Gastrocnemius medialis (tissue), 4 donors: ENCODE measurements at regions of chr1 and their contacts with region 1.

Region 1: GRCh38 chr1:44730741-44731512 is at the start of gene RNU5D-1:
- DNase-seq: peak; percentile 80 to 94
- ATAC-seq: peak; percentile 81 to 87
- H3K4me3 ChIP-seq: peak within 1 kb of the TSS in 3 of 4 donors; percentile 3 to 34 (median 3)
- H3K27ac ChIP-seq: peak within 1 kb of the TSS; percentile 70 to 87 (median 79)
- H3K4me1 ChIP-seq: peaks cover 9 to 12% of the 10 kb centered on the region in 2 donors
- H3K27me3 ChIP-seq: no peaks in the 10 kb centered on the region
- CTCF ChIP-seq: peak; percentile 77 to 89 (median 81)
- POLR2A ChIP-seq: peak; percentile 79 to 97
- total RNA-seq, gene RNU5D-1: not detected

Region 2: DNA sequence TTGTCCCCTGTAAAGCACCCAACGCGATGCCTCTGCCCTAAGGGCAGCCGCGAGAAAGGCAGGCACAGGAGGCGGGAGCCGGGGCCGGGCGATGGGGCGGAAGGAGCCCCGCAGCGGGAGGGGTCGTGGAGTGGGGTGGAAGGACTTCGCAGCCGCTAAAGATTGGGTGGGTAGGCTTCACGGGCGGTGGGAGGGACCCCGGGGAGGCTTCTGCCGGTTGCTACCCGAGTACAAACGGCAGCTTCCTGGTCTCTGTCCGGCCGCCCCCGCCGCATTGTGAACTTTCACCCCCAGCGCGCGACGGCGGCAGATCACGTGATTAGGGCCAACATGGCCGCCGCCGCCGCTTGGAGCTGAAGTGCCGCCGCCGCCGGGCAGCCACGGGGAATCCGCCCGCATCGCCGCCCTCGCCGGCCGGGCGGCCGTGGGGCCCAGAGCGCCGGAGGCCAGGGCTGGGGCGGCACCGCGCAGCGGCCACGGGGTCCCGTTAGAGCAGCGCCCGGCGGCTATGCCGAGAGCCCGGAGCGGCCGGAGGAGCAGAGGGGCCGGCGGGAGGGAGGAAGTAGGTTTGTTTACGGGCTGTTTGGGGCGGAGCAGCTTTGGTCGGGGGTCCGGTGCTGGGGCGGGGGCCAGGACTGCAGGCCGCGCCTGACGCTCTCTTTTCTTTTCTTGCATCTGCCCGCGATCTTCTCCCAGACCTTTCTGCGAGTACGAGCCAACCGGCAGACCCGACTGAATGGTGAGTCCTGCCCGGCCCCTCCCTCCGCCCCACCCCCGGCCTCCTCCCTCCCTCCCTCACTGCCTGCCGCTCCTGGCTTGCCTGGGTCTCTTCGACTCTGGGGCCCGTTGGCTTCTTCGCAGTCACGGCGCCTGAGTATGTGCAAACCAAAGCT is 99.0 kb before region 1 on chr1:
- in situ Hi-C with region 1: no loop called
- intact Hi-C with region 1: loop called (anchors 5 kb)
- DNase-seq: peak; percentile 78 to 81
- ATAC-seq: peak; percentile 87 to 90
- H3K4me3 ChIP-seq: peak overlapping the region; percentile 73 to 91 (median 86)
- H3K27ac ChIP-seq: peak overlapping the region; percentile 93 to 98 (median 95)
- H3K4me1 ChIP-seq: peaks cover 33 to 41% of the 10 kb centered on the region in 2 donors
- H3K27me3 ChIP-seq: no peaks in the 10 kb centered on the region
- CTCF ChIP-seq: peak in 3 of 5 experiments; percentile 3 to 50 (median 34)
- POLR2A ChIP-seq: peak; percentile 78 to 82

Region 3: GRCh38 chr1:44674113-44675000 is 56.6 kb before region 1 on chr1 and contains the starts of genes ARMH1 and TMEM53:
- in situ Hi-C with region 1: no loop called
- intact Hi-C with region 1: loop called (anchors 2 kb)
- DNase-seq: peak; percentile 99 to 100
- ATAC-seq: peak; percentile 93 to 95
- H3K4me3 ChIP-seq: peak within 1 kb of the TSS; percentile 62 to 88 (median 69)
- H3K27ac ChIP-seq: peak within 1 kb of the TSS; percentile 88 to 99 (median 95)
- H3K4me1 ChIP-seq: peaks cover 21 to 44% of the 10 kb centered on the region in 2 donors
- H3K27me3 ChIP-seq: no peaks in the 10 kb centered on the region
- CTCF ChIP-seq: no peak
- POLR2A ChIP-seq: peak; percentile 58 to 63
- total RNA-seq, gene ARMH1: 0.78 TPM in 1 of 4 donors, not detected in the others
- total RNA-seq, gene TMEM53: 2.6 to 5.9 (median 4.2) TPM

Region 4: GRCh38 chr1:44775078-44775929 is 44.4 kb after region 1 on chr1 and contains the start of gene RPS8:
- in situ Hi-C with region 1: no loop called
- intact Hi-C with region 1: loop called (anchors 2 kb)
- DNase-seq: peak; percentile 91 to 93
- ATAC-seq: peak; percentile 94 to 96
- H3K4me3 ChIP-seq: peak within 1 kb of the TSS; percentile 74 to 99 (median 85)
- H3K27ac ChIP-seq: peak within 1 kb of the TSS; percentile 91 to 100 (median 97)
- H3K4me1 ChIP-seq: peaks cover 9 to 12% of the 10 kb centered on the region in 2 donors
- H3K27me3 ChIP-seq: no peaks in the 10 kb centered on the region
- CTCF ChIP-seq: peak in 2 of 5 experiments; percentile 5 to 36
- POLR2A ChIP-seq: peak; percentile 95 to 97
- total RNA-seq, gene RPS8: 1,137 to 2,085 (median 1,818) TPM

Region 5: GRCh38 chr1:44819608-44820327 is 88.8 kb after region 1 on chr1:
- in situ Hi-C with region 1: no loop called
- intact Hi-C with region 1: loop called (anchors 1 kb)
- DNase-seq: peak; percentile 66 to 85
- ATAC-seq: peak; percentile 83 to 89
- H3K4me3 ChIP-seq: peak overlapping the region; percentile 46 to 70 (median 64)
- H3K27ac ChIP-seq: peak overlapping the region; percentile 86 to 91 (median 89)
- H3K4me1 ChIP-seq: peaks cover 6 to 13% of the 10 kb centered on the region in 2 donors
- H3K27me3 ChIP-seq: no peaks in the 10 kb centered on the region
- CTCF ChIP-seq: no peak
- POLR2A ChIP-seq: peak; percentile 92 to 94

Region 6: DNA sequence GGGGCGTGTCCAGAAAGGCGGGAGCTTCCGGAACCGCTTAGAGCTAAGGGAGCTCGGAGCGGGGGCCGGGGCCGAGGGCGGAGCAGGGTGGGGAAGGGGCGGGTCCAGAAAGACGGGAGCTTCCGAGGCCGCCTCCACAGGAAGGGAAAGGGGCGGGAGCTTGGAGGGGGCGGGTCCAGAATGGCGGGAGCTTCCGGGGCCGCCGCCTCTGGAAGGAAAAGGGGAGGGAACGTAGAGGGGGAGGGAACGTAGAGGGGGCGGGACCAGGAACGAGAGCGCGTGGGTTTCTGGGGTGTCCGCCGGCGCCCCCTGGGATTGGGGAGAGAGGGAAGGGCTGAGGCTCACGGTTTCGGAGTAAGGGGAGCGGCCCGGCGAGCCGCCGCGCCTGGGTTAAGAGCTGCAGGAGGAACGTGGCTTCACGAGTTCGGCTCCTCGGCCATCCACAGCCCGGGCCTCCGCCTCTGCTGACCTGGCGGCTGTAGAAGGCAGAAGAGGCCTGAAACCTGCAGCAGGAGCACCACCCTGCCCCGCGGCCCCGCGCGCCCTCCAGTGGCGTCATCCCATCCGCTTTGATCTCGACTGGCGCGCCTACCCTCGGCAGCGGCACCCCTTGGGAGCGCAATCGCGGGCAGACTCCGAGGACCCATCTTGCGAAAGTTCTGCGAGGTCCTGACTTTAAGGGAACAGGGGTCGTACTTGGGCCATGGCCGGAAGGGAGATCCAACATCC is 572.8 kb after region 1 on chr1:
- in situ Hi-C with region 1: no loop called
- intact Hi-C with region 1: loop called (anchors 5 kb)
- DNase-seq: peak; percentile 98 to 99
- ATAC-seq: peak; percentile 90 to 95
- H3K4me3 ChIP-seq: peak overlapping the region; percentile 77 to 91 (median 82)
- H3K27ac ChIP-seq: peak overlapping the region; percentile 92 to 95 (median 94)
- H3K4me1 ChIP-seq: peaks cover 8 to 16% of the 10 kb centered on the region in 2 donors
- H3K27me3 ChIP-seq: no peaks in the 10 kb centered on the region
- CTCF ChIP-seq: peak; percentile 56 to 78 (median 75)
- POLR2A ChIP-seq: peak; percentile 60 to 67

Region 7: GRCh38 chr1:45490626-45491486 is 759.9 kb after region 1 on chr1 and contains the start of gene TESK2:
- in situ Hi-C with region 1: no loop called
- intact Hi-C with region 1: loop called (anchors 5 kb)
- DNase-seq: peak; percentile 98 to 99
- ATAC-seq: peak; percentile 95 to 98
- H3K4me3 ChIP-seq: peak within 1 kb of the TSS; percentile 68 to 99 (median 90)
- H3K27ac ChIP-seq: peak within 1 kb of the TSS; percentile 87 to 96 (median 92)
- H3K4me1 ChIP-seq: peaks cover 14 to 19% of the 10 kb centered on the region in 2 donors
- H3K27me3 ChIP-seq: no peaks in the 10 kb centered on the region
- CTCF ChIP-seq: peak in 4 of 5 experiments; percentile 27 to 56 (median 30)
- POLR2A ChIP-seq: peak; percentile 89 to 92
- total RNA-seq, gene TESK2: 3.4 to 5.8 (median 4.5) TPM